Heart right ventricle (tissue), 16 donors: ENCODE measurements at regions of chr3 and their contacts with region 1.

Region 1: GRCh38 chr3:56801662-56802377 is at the start of gene ARHGEF3:
- DNase-seq: peak; percentile 83 to 90
- ATAC-seq: peak; percentile 94 to 98 (median 96)
- H3K4me3 ChIP-seq: peak within 1 kb of the TSS; percentile 71 to 94 (median 86)
- H3K27ac ChIP-seq: peak within 1 kb of the TSS in 9 of 10 donors; percentile 36 to 84 (median 79)
- H3K4me1 ChIP-seq: peaks cover 0 to 52% (median 42%) of the 10 kb centered on the region in 9 donors
- H3K27me3 ChIP-seq: no peaks in the 10 kb centered on the region
- CTCF ChIP-seq: peak; percentile 16 to 60 (median 42)
- total RNA-seq, gene ARHGEF3: 12.8 to 26.1 (median 17.9) TPM

Region 2: DNA sequence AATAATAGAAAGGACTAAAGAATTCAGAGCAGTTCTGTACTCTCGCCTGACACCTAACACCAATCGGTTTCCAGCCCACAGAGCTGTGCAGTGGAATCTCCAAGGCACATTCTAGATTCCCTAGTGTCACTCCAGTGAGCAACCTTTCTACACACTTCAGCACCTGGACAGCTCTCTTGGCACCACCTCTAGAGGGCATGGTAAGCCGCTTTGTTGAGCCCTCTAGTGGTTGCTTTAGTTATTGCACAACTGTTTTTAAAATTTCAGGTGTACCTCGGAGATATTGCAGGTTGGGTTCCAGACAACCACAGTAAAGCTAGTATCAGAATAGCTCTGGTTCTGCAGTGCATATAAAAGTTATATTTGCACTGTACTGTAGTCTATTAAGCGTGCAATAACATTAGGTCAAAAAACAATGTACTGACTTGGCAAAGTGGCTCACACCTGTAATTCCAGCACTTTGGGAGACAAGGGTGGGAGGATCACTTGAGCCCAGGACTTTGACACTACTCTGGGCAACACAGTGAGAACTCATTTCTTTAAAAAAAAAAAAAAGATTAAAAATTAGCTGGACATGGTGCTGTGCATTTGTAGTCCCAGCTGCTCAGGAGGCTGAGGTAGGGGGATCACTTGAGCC is 307.0 kb before region 1 on chr3:
- intact Hi-C with region 1: no loop called
- DNase-seq: peak; percentile 60 to 86
- ATAC-seq: peak; percentile 55 to 87 (median 84)
- H3K4me3 ChIP-seq: no peak overlapping the region
- H3K27ac ChIP-seq: no peak overlapping the region
- H3K4me1 ChIP-seq: no peaks in the 10 kb centered on the region
- H3K27me3 ChIP-seq: peaks cover 0 to 27% (median 0%) of the 10 kb centered on the region in 7 donors
- CTCF ChIP-seq: peak; percentile 73 to 93 (median 89)

Region 3: GRCh38 chr3:56753206-56753820 is 48.5 kb before region 1 on chr3:
- intact Hi-C with region 1: loop called in 4 of 10 experiments (anchors 5 to 10 kb)
- DNase-seq: no peak
- ATAC-seq: no peak
- H3K4me3 ChIP-seq: peak overlapping the region in 1 of 10 donors; percentile 48
- H3K27ac ChIP-seq: peak overlapping the region in 2 of 10 donors; percentile 77 to 91
- H3K4me1 ChIP-seq: peaks cover 9 to 78% (median 31%) of the 10 kb centered on the region in 9 donors
- H3K27me3 ChIP-seq: no peaks in the 10 kb centered on the region
- CTCF ChIP-seq: no peak

Region 4: DNA sequence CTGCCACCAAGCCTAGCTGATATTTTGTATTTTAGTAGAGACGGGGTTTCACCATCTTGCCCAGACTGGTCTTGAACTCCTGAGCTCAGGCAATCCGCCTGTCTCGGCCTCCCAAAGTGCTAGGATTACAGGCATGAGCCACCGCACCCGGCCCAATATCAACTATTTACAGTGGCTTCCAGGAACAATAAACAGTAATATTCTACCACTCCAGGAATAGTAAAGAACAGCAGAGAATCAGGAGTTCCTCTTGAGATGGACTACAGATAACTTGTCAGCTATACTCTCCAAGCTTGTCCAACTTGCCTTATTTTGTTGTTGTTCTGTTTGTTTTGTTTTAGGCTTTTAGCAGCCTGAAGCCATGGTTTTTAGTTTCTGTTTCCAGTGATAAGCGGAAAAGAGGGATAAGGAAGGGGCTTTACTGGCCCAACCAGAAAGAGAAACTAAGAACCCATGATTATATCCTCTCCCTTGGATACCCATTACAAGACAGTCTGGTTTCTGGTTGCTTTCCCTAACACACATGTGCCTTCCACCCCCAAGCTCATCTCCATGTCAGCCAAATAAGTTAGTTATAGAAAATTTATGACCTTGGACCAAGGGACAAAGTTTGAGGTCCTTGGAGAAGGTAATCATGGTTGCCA is 36.8 kb before region 1 on chr3:
- intact Hi-C with region 1: no loop called
- DNase-seq: no peak
- ATAC-seq: no peak
- H3K4me3 ChIP-seq: no peak overlapping the region
- H3K27ac ChIP-seq: no peak overlapping the region
- H3K4me1 ChIP-seq: peaks cover 6 to 69% (median 31%) of the 10 kb centered on the region in 9 donors
- H3K27me3 ChIP-seq: no peaks in the 10 kb centered on the region
- CTCF ChIP-seq: no peak

Region 5: GRCh38 chr3:56894881-56895431 is 93.1 kb after region 1 on chr3:
- intact Hi-C with region 1: no loop called
- DNase-seq: no peak
- ATAC-seq: peak in 3 of 8 donors; percentile 30 to 63 (median 51)
- H3K4me3 ChIP-seq: no peak overlapping the region
- H3K27ac ChIP-seq: peak overlapping the region in 1 of 10 donors; percentile 31
- H3K4me1 ChIP-seq: peaks cover 0 to 15% (median 0%) of the 10 kb centered on the region in 9 donors
- H3K27me3 ChIP-seq: no peaks in the 10 kb centered on the region
- CTCF ChIP-seq: no peak

Region 6: DNA sequence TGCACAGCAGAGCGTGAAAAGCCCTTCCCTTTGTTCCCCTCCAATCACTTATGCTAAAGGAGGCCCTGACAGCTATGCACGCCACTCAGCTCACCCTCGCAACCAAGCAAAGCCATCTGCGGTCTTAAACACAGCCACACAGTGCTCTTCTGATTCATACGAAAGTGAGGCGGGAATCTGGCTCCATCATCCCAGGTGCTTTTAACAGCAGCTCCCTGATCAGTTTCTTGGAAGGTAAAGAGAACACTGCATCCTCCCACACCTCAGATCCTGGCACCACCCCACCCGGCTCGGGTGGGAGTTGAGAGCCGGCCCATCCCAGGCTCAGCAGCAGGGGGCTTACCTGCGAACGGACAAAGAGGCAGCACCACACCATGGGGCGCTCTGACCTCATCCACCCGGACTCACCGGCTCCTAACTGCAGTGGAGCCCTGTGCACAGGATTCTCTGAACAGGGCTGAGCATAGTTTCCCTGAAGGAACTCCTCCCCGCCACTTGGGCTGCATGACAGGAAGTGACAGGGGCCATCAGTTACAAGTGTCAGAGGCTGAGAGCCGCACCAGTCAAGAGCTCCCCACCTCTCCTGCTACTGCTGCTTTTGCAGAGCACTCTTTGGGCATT is 114.3 kb after region 1 on chr3:
- intact Hi-C with region 1: loop called in 4 of 10 experiments (anchors 5 to 10 kb)
- DNase-seq: peak; percentile 25 to 55
- ATAC-seq: peak; percentile 79 to 93 (median 85)
- H3K4me3 ChIP-seq: peak overlapping the region in 9 of 10 donors; percentile 25 to 60 (median 53)
- H3K27ac ChIP-seq: peak overlapping the region in 9 of 10 donors; percentile 36 to 81 (median 71)
- H3K4me1 ChIP-seq: peaks cover 5 to 43% (median 26%) of the 10 kb centered on the region in 9 donors
- H3K27me3 ChIP-seq: no peaks in the 10 kb centered on the region
- CTCF ChIP-seq: peak in 2 of 9 donors; percentile 5 to 34

Region 7: GRCh38 chr3:56970461-56970879 is 168.7 kb after region 1 on chr3:
- intact Hi-C with region 1: loop called in 1 of 10 experiments (anchors 5 kb)
- DNase-seq: no peak
- ATAC-seq: peak in 7 of 8 donors; percentile 24 to 74 (median 48)
- H3K4me3 ChIP-seq: no peak overlapping the region
- H3K27ac ChIP-seq: peak overlapping the region in 2 of 10 donors; percentile 11 to 39
- H3K4me1 ChIP-seq: peaks cover 0 to 16% (median 0%) of the 10 kb centered on the region in 9 donors
- H3K27me3 ChIP-seq: no peaks in the 10 kb centered on the region
- CTCF ChIP-seq: no peak